Posterior vena cava (tissue), 2 donors: ENCODE measurements at regions of chr2 and their contacts with region 1.

Region 1: DNA sequence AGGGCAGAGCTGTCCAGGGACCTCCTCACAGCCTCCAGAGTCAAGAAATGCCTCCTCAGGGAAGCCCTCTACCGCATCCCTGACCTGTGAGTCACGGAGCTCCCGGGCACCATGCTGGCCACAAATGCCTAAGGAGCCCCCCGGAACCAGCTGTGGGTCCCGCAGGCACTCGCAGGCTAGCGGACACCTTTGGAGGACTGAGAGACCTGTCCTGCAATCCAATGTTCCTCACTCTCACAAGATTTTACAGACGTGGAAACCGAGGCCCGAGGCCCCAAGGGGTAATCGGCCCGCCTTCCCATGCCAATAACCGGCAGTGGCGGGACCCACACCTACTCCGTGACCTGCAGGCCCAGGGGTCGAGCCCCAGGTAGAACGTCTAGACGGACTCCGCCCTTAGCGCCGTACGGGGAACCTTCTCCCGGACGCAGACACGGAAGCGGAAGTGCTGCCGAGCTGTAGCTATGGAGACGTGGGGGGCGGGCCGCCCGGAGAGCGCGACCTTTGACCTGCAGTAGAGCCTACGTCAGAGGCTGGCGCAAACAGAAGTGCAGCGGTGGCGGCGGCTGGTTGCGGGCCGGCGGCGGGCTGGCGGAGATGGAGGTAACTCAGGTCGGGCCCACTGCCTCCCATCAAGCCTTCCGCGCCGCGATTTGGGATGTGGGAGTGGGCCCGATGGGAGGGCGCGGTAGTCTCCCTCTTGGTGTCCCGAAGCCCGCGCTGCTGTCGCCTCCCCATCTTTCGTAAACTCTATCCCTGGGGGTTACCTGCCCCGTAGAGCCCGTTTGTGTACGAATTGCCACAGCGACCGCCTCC is at the start of gene GCC2:
- DNase-seq: peak; percentile 99
- total RNA-seq, gene GCC2: 35.8 to 39.8 TPM

Region 2: DNA sequence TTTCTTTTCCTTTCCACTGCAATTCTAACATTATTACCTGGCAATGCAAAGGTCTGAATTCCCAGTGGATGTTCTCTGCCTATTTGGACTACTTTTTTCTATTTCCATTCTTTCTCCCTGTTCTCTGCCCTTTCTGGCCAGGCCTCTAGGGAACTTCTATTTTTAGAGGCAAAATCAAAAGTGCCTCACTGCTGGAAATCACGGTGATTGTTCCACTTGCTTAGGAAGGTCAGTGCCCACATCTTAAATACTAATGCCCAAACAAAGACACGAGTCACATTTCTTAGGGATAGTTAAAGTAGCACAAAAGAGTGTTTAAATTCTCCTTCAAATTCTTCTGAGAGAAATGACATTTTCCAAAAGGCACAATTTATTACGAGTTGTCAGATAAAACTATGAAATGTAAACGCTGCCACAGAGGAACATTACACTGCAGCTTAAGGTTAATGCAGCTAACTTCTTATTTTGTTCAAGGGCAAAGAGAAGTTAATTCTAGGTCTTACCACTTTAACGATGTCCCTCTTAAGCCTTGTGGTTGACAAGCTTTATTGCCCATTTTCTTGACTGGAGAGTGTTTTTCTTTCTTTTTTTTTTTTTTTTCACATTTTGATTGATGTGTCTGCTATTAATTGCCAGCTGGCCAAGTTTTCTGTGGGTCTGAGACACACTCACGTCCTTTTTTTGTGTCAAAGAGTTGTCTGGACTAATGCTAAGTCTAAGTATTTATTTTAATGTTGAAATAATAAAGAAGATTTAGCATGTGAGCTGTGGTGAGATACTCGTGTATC is 1597.6 kb before region 1 on chr2:
- intact Hi-C with region 1: loop called in 1 of 2 experiments (anchors 5 kb)
- DNase-seq: no peak

Region 3: GRCh38 chr2:108853406-108853805 is 404.5 kb after region 1 on chr2:
- intact Hi-C with region 1: no loop called
- DNase-seq: no peak